ENCODE measurements at regions of chr6 and their contacts with region 1.

Region 1: DNA sequence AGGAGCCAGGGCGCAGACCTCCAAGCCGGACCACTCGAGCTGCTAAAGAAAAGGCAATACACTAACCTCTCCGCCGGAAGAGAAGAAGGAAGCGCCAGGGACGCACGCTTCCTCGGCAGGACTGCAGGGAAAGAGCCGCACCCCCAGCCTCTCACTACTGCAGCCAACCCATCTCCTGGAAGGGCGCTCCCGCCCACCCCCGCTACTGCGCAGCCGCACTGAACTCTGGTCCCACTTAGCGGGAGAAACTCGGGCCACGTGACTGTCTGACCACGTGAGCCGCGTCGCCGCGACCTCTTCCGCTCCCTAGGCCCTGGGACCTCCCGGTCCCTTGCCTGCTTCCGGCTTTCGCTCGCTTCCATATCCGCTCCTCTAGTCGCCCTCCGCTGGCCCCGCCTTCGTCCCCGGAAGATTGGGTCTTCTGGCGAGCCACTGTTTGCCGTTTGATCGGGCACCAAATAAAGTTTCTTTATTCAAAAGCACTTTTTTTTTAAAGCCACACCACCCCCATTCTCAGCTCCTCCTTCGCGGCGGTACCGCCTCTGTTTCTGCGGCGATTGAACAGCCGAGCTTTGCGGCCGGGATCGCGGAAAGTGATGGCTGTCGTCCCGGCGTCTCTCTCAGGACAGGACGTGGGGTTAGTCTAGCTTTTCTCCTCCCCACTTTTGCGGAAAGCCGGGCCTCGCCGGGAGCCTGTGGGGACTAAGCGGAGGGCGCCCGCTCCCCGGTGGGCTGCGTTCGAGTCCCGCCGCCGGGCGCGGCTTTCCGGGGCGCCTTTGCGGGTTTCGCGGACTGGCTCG is at the start of gene RMND1:
- DNase-seq: peak; percentile 100
- H3K4me3 ChIP-seq: peak within 1 kb of the TSS; percentile 78 to 100 (median 100)
- H3K27ac ChIP-seq: peak within 1 kb of the TSS; percentile 78
- H3K4me1 ChIP-seq: peaks cover 13% of the 10 kb centered on the region
- H3K27me3 ChIP-seq: no peaks in the 10 kb centered on the region
- CTCF ChIP-seq: no peak
- POLR2A ChIP-seq: peak; percentile 93
- total RNA-seq, gene RMND1: 17.2 and 21.4 TPM in 2 replicates

Region 2: DNA sequence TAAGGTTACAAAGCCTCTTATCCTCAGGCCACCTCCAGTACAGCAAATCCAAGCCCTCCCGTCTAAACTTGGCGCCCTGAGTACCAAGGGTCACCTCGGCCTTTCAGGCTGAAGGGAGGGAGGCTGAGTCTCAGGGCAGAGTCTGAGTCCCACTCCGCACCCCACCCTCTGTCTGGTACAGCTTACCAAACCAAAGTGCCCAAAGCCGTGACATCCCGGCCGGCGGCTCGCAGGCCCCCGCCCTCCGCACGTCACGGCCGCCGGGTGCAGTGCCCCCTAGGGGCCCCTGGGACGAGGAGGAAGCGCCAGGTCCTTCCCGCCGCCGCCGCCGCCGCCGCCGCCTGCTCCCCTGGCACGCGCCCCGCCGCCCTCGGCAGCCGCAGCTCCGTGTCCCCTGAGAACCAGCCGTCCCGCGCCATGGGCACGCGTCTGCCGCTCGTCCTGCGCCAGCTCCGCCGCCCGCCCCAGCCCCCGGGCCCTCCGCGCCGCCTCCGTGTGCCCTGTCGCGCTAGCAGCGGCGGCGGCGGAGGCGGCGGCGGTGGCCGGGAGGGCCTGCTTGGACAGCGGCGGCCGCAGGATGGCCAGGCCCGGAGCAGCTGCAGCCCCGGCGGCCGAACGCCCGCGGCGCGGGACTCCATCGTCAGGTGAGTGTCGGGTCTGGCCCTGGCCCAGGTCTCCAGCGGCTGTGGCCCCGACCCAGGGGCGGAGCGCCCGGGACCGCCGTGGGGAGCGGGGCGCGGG is 586.6 kb before region 1 on chr6 and contains the start of gene MTHFD1L:
- CTCF ChIA-PET with region 1: no interaction called
- POLR2A ChIA-PET with region 1: no interaction called
- dilution Hi-C with region 1: no loop called
- intact Hi-C with region 1: loop called (anchors 1 kb)
- DNase-seq: peak; percentile 86
- H3K4me3 ChIP-seq: peak within 1 kb of the TSS; percentile 90 to 93 (median 92)
- H3K27ac ChIP-seq: peak within 1 kb of the TSS; percentile 93
- H3K4me1 ChIP-seq: peaks cover 25% of the 10 kb centered on the region
- H3K27me3 ChIP-seq: no peaks in the 10 kb centered on the region
- CTCF ChIP-seq: peak; percentile 58 to 62
- POLR2A ChIP-seq: peak; percentile 60
- total RNA-seq, gene MTHFD1L: 120 and 121 TPM in 2 replicates

Region 3: GRCh38 chr6:151390276-151391032 is 61.7 kb before region 1 on chr6:
- CTCF ChIA-PET with region 1: interaction called, 4 read pairs
- POLR2A ChIA-PET with region 1: no interaction called
- dilution Hi-C with region 1: no loop called
- intact Hi-C with region 1: loop called (anchors 1 kb)
- DNase-seq: peak; percentile 99
- H3K4me3 ChIP-seq: peak overlapping the region; percentile 17 to 93 (median 86)
- H3K27ac ChIP-seq: peak overlapping the region; percentile 94
- H3K4me1 ChIP-seq: peaks cover 28% of the 10 kb centered on the region
- H3K27me3 ChIP-seq: no peaks in the 10 kb centered on the region
- CTCF ChIP-seq: peak in 1 of 2 donors; percentile 4
- POLR2A ChIP-seq: peak; percentile 80

Region 4: DNA sequence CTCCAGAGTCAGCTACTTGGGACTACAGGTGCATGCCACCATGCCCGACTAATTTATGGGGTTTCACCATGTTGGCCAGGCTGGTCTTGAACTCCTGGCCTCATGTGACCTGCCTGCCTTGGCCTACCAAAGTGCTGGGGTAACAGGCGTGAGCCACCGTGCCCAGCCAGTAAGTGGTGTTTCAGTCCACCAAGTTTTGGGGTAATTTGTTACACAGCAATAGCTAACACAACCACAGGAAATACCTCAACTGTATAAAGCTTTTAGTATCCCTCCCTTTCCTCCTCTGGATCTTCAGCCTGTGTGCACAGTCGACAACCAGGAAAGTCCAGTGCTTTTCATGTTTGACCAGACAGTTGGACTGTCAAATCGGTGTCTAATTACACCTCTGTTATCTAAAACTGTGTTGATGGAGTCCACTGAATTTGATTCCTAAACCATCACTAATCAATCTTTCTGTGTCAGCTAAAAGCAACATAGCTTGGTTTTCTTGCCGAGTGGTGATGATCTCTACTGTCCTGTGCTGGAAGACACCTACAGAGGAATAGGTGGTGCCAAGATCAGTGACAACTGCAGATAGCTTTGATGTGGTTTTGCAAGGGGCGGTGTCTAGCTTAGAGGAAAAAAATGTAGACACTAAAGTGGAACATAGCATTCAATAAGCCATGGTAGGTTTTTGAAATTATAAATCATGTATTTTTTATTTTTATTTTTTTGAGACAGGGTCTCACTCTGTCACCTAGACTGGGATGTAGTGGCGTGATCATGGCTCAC is 38.6 kb before region 1 on chr6:
- CTCF ChIA-PET with region 1: no interaction called
- POLR2A ChIA-PET with region 1: no interaction called
- dilution Hi-C with region 1: no loop called
- intact Hi-C with region 1: no loop called
- DNase-seq: no peak
- H3K4me3 ChIP-seq: no peak overlapping the region
- H3K27ac ChIP-seq: no peak overlapping the region
- H3K4me1 ChIP-seq: no peaks in the 10 kb centered on the region
- H3K27me3 ChIP-seq: no peaks in the 10 kb centered on the region
- CTCF ChIP-seq: no peak
- POLR2A ChIP-seq: no peak

Region 5: DNA sequence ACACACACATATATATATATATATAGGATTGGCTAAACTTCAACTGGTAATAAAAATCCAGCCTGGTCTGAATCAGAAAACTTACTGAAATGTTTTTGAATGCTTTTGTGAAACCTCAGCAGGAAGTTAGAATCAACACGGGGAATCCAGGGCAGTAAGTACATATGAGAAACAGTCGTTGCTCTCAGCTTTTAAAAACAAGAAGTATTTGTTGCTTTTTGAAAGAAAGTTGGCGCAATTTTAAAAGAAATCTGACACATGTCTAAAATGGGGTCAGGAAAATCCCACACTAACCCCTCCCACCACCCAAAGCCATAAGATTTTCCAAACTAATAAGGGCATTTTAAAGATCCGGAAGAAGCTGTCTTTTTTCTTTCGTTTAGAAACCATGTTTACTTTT is 30.1 kb after region 1 on chr6:
- CTCF ChIA-PET with region 1: interaction called, 4 read pairs
- POLR2A ChIA-PET with region 1: no interaction called
- dilution Hi-C with region 1: no loop called
- intact Hi-C with region 1: loop called (anchors 2 kb)
- DNase-seq: peak; percentile 73
- H3K4me3 ChIP-seq: no peak overlapping the region
- H3K27ac ChIP-seq: peak overlapping the region; percentile 59
- H3K4me1 ChIP-seq: peaks cover 12% of the 10 kb centered on the region
- H3K27me3 ChIP-seq: no peaks in the 10 kb centered on the region
- CTCF ChIP-seq: no peak
- POLR2A ChIP-seq: no peak

Region 6: DNA sequence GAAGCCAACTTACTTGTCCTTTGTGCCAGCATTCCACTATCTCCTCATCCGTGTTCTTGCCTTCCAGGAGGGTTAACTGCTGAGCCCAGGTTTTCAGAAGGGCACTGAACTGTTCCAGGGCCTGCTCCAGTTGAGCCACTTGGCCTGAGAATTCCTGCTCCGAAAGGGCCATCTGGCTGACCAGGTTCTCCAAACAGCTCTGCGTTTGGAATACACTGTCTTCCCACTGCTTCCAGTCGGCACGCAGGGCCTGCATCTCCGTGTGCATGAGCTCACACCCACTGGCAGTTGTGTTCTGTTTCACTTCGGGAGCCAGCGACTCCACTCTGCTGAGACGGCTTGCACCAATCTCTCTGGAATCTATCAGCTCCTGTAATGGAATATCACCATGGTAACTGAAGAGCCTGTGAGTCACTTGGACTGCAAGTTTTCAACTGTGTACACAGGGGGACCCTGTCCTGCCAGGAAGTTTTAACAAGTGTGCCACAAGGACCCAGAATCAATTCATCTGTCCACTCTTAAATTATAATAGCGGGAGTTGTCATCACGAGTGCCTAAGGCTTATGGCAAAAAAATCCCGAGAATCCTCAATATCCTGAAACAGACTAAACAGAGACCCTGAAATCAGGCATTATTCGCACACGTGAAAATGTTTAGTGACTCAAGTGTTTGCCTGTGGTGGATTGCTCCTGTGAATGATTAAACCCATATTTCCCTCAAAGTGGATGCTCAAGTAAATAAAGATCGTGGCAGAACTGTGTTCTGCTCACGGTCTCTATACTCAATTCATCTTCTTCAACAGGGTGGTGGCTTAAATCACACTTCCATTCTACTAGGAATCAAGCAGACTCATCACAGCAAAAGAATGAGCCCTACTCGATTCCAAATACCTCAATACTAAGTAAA is 929.1 kb after region 1 on chr6:
- CTCF ChIA-PET with region 1: no interaction called
- POLR2A ChIA-PET with region 1: no interaction called
- dilution Hi-C with region 1: no loop called
- intact Hi-C with region 1: loop called (anchors 1 kb)
- DNase-seq: peak; percentile 95
- H3K4me3 ChIP-seq: peak overlapping the region; percentile 50 to 84 (median 53)
- H3K27ac ChIP-seq: peak overlapping the region; percentile 96
- H3K4me1 ChIP-seq: peaks cover 23% of the 10 kb centered on the region
- H3K27me3 ChIP-seq: no peaks in the 10 kb centered on the region
- CTCF ChIP-seq: no peak
- POLR2A ChIP-seq: no peak

Measured in endothelial cell of umbilical vein (primary cell).